Aorta (tissue), 5 donors: ENCODE measurements at regions of chr4 and their contacts with region 1.

Region 1: DNA sequence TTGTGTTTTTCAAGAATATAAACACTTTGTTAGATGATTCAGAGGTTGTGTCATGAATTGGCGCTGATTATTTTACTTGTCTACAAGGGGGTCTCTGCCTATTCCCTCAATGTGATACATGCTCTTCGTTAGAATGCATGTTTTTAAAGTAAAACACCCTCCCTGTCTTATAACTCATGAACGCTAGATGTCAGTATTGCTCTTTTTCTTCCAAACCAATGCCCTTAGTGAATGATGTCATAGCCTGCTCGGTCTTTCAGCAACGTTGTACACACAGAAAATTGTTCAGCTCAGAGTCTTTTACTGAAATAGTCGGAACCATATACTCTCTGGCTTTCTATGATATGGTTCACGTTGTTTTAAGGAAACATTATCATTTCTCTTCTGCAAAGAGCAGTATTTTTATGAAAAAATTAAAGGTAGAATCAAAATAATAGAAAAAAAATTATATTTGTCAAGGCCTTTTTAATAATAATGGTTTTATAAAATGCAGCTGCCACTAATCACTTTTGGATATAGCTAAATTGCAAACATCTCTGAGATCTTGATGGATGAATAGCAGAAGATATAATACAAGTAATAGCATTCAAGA is 292.9 kb downstream of the TLL1 start:
- DNase-seq: no peak
- ATAC-seq: peak; percentile 73
- H3K4me3 ChIP-seq: no peak overlapping the region
- H3K27ac ChIP-seq: no peak overlapping the region
- H3K4me1 ChIP-seq: no peaks in the 10 kb centered on the region
- H3K27me3 ChIP-seq: no peaks in the 10 kb centered on the region

Region 2: DNA sequence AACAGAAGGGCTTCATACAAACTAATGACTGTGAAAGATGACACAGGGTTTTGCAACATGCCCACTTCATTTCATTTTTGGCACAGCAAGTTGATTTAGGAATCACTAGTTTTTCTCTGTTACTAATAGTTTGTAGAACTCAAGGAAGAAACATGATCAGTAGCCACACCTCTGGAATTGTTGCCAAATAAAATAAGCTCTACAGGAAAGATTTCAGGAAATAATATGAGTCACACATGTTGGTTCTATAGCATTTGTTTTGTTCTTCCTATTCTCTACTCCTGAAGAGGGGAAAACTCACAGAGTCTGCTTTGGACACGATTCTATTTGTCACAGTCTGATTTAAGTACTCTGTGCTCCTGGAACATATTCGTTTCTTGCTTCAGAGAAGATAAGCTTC is 37.5 kb before region 1 on chr4:
- intact Hi-C with region 1: no loop called
- DNase-seq: no peak
- ATAC-seq: no peak
- H3K4me3 ChIP-seq: no peak overlapping the region
- H3K27ac ChIP-seq: no peak overlapping the region
- H3K4me1 ChIP-seq: no peaks in the 10 kb centered on the region
- H3K27me3 ChIP-seq: peaks cover 0 to 2% of the 10 kb centered on the region in 2 donors

Region 3: DNA sequence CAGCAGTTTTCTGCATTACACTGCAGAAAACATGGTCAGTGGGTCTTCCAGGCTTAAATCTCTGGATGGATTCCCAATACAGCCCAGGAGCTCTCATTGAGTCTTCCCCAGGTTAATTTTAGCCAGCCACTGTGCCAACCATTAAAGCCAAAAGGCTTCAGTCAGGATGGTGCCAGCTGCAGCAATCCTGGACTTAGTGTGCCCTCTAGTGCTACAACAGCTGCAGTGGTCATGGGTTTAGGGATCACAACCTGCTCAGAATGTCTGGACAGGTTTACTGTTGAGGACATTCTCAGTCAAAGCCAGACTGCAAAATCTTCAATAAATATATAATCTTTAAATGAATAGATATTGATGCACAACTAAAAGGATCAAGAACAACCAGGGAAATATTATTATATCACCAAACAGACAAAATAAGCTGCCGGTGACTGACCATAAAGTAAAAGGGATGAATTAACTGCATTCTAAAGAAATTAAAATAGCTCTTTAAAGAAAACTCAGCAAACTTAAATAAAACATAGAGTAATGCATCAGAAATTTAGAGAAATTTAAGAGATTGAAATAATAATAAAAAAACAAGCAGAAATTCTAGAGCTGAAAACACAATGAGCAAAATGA is 428.5 kb after region 1 on chr4:
- intact Hi-C with region 1: loop called (anchors 2 kb)
- DNase-seq: no peak
- ATAC-seq: no peak
- H3K4me3 ChIP-seq: no peak overlapping the region
- H3K27ac ChIP-seq: no peak overlapping the region
- H3K4me1 ChIP-seq: no peaks in the 10 kb centered on the region
- H3K27me3 ChIP-seq: no peaks in the 10 kb centered on the region

Region 4: GRCh38 chr4:167622481-167623246 is 1456.7 kb after region 1 on chr4:
- intact Hi-C with region 1: loop called in 1 of 2 experiments (anchors 10 kb)
- DNase-seq: peak in 1 of 2 donors; percentile 42
- ATAC-seq: no peak
- H3K4me3 ChIP-seq: no peak overlapping the region
- H3K27ac ChIP-seq: no peak overlapping the region
- H3K4me1 ChIP-seq: no peaks in the 10 kb centered on the region
- H3K27me3 ChIP-seq: no peaks in the 10 kb centered on the region